Activated CD4-positive, alpha-beta memory T cell treated with anti-CD3 and anti-CD28 coated beads for 36 hours (primary cell): ENCODE measurements at regions of chr1 and their contacts with region 1.

Region 1: GRCh38 chr1:158117854-158118704 is 62.6 kb upstream of the CD1D start:
- DNase-seq: peak; percentile 28
- H3K4me3 Mint-ChIP-seq: no peak overlapping the region
- H3K27ac Mint-ChIP-seq: no peak overlapping the region
- H3K4me1 Mint-ChIP-seq: peaks cover 8% of the 10 kb centered on the region
- H3K27me3 Mint-ChIP-seq: peaks cover 50% of the 10 kb centered on the region

Region 2: DNA sequence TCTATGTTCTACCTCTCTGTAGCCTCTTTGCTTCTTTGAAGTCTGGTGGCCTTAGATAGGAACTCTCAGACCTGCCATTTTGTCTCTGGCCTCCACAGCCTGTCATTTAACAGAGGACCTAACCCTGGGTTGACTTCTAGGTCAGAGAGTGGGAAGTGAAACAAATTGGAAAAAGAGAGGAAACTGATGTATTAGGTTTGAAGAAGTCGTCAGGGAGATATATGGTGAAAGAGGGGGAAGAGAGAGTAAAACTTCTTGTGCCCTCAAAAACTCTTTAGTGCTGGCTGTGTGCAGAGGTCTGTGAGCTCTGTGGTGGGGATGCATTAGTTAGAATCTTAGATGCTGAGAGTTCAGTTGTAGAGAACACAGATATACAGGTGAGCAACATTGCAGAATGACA is 32.4 kb after region 1 on chr1:
- CTCF ChIA-PET with region 1: no interaction called
- POLR2A ChIA-PET with region 1: no interaction called
- intact Hi-C with region 1: no loop called
- DNase-seq: no peak
- H3K4me3 Mint-ChIP-seq: peak overlapping the region; percentile 80
- H3K27ac Mint-ChIP-seq: peak overlapping the region; percentile 67
- H3K4me1 Mint-ChIP-seq: peaks cover 21% of the 10 kb centered on the region
- H3K27me3 Mint-ChIP-seq: peaks cover 8% of the 10 kb centered on the region

Region 3: DNA sequence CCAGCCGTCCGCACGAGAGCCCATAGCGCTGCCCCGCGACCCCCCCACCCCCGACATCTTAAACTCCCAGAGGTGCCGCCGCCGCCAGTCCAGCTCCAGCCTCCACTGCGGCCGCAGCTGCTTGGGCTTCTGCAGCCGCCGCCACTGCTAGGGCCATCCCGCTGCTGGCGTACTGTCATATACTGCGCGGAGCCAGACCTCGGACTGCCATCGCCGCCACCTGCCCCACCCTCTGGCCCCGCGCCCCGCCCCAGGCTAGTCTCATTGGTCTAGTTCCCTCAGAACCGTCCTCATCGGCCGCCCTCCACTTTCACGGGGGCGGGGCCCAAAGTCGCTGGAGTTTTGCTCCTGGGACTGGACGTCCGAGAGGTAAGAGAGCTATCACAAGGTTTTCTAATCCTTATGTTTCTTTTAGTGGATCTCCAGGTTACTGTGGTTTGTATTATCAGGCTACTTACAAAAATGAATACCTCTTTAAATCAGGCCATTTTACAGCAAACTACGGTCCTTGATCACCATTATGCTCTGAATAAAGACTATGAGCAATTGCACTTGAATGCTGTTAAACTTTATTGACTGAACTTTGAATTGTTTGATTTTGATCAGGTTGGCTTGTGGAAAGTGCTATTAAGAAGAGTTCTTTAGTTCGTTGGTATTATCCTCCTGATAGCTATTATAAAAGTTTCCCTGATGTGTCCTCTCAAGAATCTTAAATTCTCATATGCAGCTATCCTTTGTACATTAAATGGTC is 59.8 kb after region 1 on chr1:
- CTCF ChIA-PET with region 1: no interaction called
- POLR2A ChIA-PET with region 1: no interaction called
- intact Hi-C with region 1: loop called (anchors 10 kb)
- DNase-seq: peak; percentile 44
- H3K4me3 Mint-ChIP-seq: no peak overlapping the region
- H3K27ac Mint-ChIP-seq: no peak overlapping the region
- H3K4me1 Mint-ChIP-seq: peaks cover 17% of the 10 kb centered on the region
- H3K27me3 Mint-ChIP-seq: peaks cover 67% of the 10 kb centered on the region